ENCODE measurements at regions of chr3 and their contacts with region 1.

Region 1: DNA sequence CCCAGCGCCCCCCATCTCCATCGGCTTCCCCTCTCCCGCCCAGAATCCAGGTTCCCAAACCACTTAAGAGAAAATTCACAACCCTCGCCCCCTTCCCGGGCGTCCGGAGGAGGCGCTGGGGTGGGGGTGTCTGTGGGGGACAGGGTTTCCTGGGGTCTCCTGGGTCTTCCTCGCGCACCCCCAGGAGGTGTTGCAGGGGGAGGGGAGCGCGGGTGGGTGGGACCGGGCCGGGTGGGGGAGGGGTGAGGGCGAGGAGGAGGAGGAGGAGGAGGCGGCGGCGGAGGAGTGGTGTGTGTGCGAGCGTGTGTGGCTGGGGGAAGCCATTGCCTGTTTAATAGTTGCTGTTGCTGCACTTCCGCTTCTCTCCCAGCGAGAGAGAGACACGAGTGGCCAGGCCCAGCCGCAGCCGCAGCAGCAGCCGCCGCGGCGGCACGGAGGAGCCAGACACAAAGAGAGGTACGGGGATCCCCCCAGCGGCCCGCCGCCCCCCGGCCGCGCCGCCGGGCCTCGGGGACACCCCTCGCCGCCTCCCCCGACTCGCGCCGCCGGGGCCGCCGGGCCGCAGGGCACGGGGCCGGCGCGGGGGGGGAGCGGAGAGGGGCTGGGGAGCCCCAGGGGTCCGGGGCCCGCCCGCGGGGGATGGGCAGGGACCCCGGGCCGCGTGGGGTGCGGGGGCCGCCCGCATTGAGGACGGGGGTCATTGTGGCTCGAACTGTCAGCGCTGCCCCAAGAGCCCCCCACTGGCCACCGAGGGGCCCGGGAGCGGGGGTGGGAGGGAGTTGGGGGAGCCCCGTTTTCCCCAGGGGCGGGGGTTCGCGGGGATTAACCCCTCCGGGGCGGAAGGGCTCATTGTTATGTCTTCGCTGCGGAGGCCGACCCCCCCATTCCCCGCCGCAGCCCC is at the start of gene UBE2E1:
- DNase-seq: peak; percentile 74 to 90
- ATAC-seq: peak; percentile 78 to 90 (median 90)
- H3K4me3 ChIP-seq: peak within 1 kb of the TSS; percentile 56
- H3K4me3 Mint-ChIP-seq: peak within 1 kb of the TSS; percentile 97
- H3K27ac ChIP-seq: peak within 1 kb of the TSS; percentile 45
- H3K27ac Mint-ChIP-seq: peak within 1 kb of the TSS; percentile 89 to 93
- H3K4me1 ChIP-seq: peaks cover 18% of the 10 kb centered on the region
- H3K4me1 Mint-ChIP-seq: peaks cover 46 to 48% of the 10 kb centered on the region in 2 donors
- H3K27me3 ChIP-seq: no peaks in the 10 kb centered on the region
- H3K27me3 Mint-ChIP-seq: no peaks in the 10 kb centered on the region
- CTCF ChIP-seq: no peak
- total RNA-seq, gene UBE2E1: 80.0 to 89.5 (median 86.9) TPM

Region 2: DNA sequence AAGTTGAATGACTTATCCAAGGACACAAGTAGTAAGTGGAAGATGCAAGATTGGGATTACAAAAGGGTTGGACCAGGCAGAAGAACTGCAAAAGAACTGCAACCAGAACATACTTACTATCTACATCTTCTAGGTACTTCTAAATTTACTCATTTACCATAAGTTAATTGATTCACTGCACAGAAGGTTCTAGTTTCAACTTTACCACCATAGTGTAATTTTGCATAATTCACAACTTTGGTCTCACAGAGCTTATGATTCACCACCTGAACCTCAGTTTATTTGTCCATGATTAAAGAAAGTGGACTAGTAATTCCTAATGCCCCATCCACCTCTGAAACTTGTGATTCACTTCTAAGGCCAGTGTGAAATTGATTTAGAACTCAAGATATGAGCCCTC is 839.5 kb before region 1 on chr3:
- intact Hi-C with region 1: no loop called
- DNase-seq: no peak
- ATAC-seq: no peak
- H3K4me3 ChIP-seq: no peak overlapping the region
- H3K4me3 Mint-ChIP-seq: no peak overlapping the region
- H3K27ac ChIP-seq: no peak overlapping the region
- H3K27ac Mint-ChIP-seq: no peak overlapping the region
- H3K4me1 ChIP-seq: no peaks in the 10 kb centered on the region
- H3K4me1 Mint-ChIP-seq: no peaks in the 10 kb centered on the region
- H3K27me3 ChIP-seq: no peaks in the 10 kb centered on the region
- H3K27me3 Mint-ChIP-seq: no peaks in the 10 kb centered on the region
- CTCF ChIP-seq: no peak

Region 3: DNA sequence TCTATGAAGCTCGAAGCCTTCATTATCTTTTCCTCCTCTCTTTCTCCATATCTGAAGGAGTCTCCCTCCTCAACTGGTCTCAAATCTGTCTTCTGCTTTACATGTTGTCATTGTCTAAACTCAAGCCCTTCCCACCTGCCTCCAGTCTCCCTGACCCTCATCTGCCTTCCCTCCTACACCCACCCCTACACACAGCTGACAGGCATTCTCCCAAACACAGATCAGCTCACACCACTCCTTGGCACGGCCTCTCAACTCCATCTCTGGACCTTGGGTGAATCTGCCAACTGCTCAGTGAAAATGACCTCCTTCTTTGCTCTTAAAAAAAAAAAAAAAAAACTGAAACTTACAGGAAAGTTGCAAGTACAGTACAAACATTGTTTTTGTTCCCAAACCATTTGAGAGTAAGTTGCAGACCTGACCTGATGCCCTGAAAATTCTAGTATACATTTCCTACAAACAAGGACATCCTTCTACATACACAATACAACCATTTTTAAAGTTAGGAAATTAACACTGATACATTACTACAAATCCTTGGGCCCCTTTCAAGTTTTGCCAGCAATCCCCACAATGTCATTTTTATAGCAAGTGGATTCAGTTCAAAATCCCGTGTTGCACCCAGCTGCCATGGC is 49.6 kb before region 1 on chr3:
- intact Hi-C with region 1: loop called (anchors 5 kb)
- DNase-seq: no peak
- ATAC-seq: no peak
- H3K4me3 ChIP-seq: no peak overlapping the region
- H3K4me3 Mint-ChIP-seq: no peak overlapping the region
- H3K27ac ChIP-seq: no peak overlapping the region
- H3K27ac Mint-ChIP-seq: no peak overlapping the region
- H3K4me1 ChIP-seq: peaks cover 29% of the 10 kb centered on the region
- H3K4me1 Mint-ChIP-seq: peaks cover 30 to 33% of the 10 kb centered on the region in 2 donors
- H3K27me3 ChIP-seq: no peaks in the 10 kb centered on the region
- H3K27me3 Mint-ChIP-seq: no peaks in the 10 kb centered on the region
- CTCF ChIP-seq: no peak

Region 4: GRCh38 chr3:23916886-23917678 is 111.2 kb after region 1 on chr3 and contains the starts of genes NKIRAS1 and RPL15:
- intact Hi-C with region 1: loop called (anchors 2 kb)
- DNase-seq: peak; percentile 94 to 98
- ATAC-seq: peak; percentile 91 to 99 (median 94)
- H3K4me3 ChIP-seq: peak within 1 kb of the TSS; percentile 100
- H3K4me3 Mint-ChIP-seq: peak within 1 kb of the TSS; percentile 97
- H3K27ac ChIP-seq: peak within 1 kb of the TSS; percentile 86
- H3K27ac Mint-ChIP-seq: peak within 1 kb of the TSS; percentile 95 to 97
- H3K4me1 ChIP-seq: peaks cover 21% of the 10 kb centered on the region
- H3K4me1 Mint-ChIP-seq: peaks cover 38 to 42% of the 10 kb centered on the region in 2 donors
- H3K27me3 ChIP-seq: no peaks in the 10 kb centered on the region
- H3K27me3 Mint-ChIP-seq: peaks cover 0 to 2% of the 10 kb centered on the region in 2 donors
- CTCF ChIP-seq: no peak
- total RNA-seq, gene NKIRAS1: 2.2 to 3.3 (median 2.8) TPM
- total RNA-seq, gene RPL15: 1,116 to 1,338 (median 1,291) TPM

Region 5: GRCh38 chr3:23945903-23946751 is 140.2 kb after region 1 on chr3:
- intact Hi-C with region 1: loop called (anchors 10 kb)
- DNase-seq: peak; percentile 99
- ATAC-seq: peak; percentile 75 to 89 (median 76)
- H3K4me3 ChIP-seq: peak overlapping the region; percentile 82
- H3K4me3 Mint-ChIP-seq: peak overlapping the region; percentile 77
- H3K27ac ChIP-seq: peak overlapping the region; percentile 86
- H3K27ac Mint-ChIP-seq: peak overlapping the region; percentile 63 to 97
- H3K4me1 ChIP-seq: peaks cover 18% of the 10 kb centered on the region
- H3K4me1 Mint-ChIP-seq: peaks cover 39 to 41% of the 10 kb centered on the region in 2 donors
- H3K27me3 ChIP-seq: no peaks in the 10 kb centered on the region
- H3K27me3 Mint-ChIP-seq: no peaks in the 10 kb centered on the region
- CTCF ChIP-seq: no peak

Region 6: DNA sequence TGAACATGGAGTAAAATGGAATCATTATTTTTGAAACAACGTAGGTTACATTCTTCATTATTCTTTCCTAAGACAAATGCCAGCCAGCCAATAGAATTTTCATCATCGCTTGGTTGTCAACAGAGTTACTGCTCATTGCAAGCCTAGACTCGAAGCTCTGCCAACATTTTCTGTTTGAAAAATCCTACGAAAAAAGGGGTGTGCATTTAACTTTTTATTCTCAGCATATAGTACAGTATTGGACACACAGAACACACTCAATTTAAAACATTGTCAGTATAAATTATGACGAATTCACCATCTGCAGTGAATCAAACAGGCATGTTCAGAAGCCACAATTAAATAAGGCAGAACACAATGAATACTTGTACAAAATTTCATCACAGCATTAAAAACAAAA is 371.3 kb after region 1 on chr3:
- intact Hi-C with region 1: no loop called
- DNase-seq: no peak
- ATAC-seq: no peak
- H3K4me3 ChIP-seq: no peak overlapping the region
- H3K4me3 Mint-ChIP-seq: no peak overlapping the region
- H3K27ac ChIP-seq: no peak overlapping the region
- H3K27ac Mint-ChIP-seq: no peak overlapping the region
- H3K4me1 ChIP-seq: no peaks in the 10 kb centered on the region
- H3K4me1 Mint-ChIP-seq: no peaks in the 10 kb centered on the region
- H3K27me3 ChIP-seq: no peaks in the 10 kb centered on the region
- H3K27me3 Mint-ChIP-seq: no peaks in the 10 kb centered on the region
- CTCF ChIP-seq: no peak

Region 7: GRCh38 chr3:24538891-24539290 is 733.0 kb after region 1 on chr3:
- intact Hi-C with region 1: no loop called
- DNase-seq: no peak
- ATAC-seq: no peak
- H3K4me3 ChIP-seq: no peak overlapping the region
- H3K4me3 Mint-ChIP-seq: no peak overlapping the region
- H3K27ac ChIP-seq: no peak overlapping the region
- H3K27ac Mint-ChIP-seq: no peak overlapping the region
- H3K4me1 ChIP-seq: no peaks in the 10 kb centered on the region
- H3K4me1 Mint-ChIP-seq: no peaks in the 10 kb centered on the region
- H3K27me3 ChIP-seq: no peaks in the 10 kb centered on the region
- H3K27me3 Mint-ChIP-seq: no peaks in the 10 kb centered on the region
- CTCF ChIP-seq: no peak